Mammary epithelial cell (primary cell): ENCODE measurements at regions of chr20 and their contacts with region 1.

Region 1: DNA sequence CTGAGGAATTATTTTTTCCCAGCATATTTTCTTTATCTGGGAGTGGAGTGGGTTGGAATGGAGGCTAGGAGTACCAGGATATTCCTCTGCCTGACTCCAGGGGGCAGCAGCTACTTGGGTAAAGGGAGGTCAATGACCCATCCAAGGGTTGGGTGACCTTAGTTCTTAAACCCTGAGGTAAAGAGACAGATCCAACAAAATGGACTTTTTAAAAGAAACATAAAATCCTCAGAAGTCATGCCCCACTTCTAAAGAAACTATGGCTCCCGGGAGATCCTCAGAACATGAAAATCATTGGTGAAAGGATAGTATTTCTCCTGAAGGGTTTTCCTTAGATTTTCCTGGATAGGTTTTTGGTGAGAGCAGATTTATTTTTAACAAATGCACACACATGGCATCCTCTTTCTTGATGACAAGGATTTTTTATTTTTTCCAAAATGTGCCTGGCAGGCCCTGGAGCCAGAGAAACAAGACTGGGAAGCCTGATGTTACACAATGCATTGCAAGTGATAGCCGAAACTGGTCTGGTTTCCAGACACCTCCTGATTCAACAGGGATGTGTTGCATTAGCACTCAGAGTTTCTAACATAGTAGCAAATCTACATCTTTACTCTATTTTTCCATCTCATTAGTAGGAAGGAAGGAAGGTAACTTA is 240.9 kb upstream of the BTBD3 start:
- DNase-seq: peak; percentile 27
- H3K4me3 ChIP-seq: no peak overlapping the region
- H3K27ac ChIP-seq: no peak overlapping the region
- H3K4me1 ChIP-seq: no peaks in the 10 kb centered on the region
- H3K27me3 ChIP-seq: no peaks in the 10 kb centered on the region
- CTCF ChIP-seq: peak; percentile 87 to 94

Region 2: GRCh38 chr20:11849976-11850670 is 173.4 kb after region 1 on chr20:
- CTCF ChIA-PET with region 1: no interaction called
- dilution Hi-C with region 1: no loop called
- in situ Hi-C with region 1: no loop called
- intact Hi-C with region 1: loop called (anchors 5 kb)
- DNase-seq: peak; percentile 93
- H3K4me3 ChIP-seq: peak overlapping the region in 2 of 3 experiments; percentile 39 to 41
- H3K27ac ChIP-seq: peak overlapping the region; percentile 89
- H3K4me1 ChIP-seq: peaks cover 43% of the 10 kb centered on the region
- H3K27me3 ChIP-seq: no peaks in the 10 kb centered on the region
- CTCF ChIP-seq: no peak

Region 3: GRCh38 chr20:11917663-11918062 is 240.9 kb after region 1 on chr20 and contains the start of gene BTBD3:
- CTCF ChIA-PET with region 1: no interaction called
- dilution Hi-C with region 1: no loop called
- in situ Hi-C with region 1: no loop called
- intact Hi-C with region 1: loop called (anchors 2 kb)
- DNase-seq: peak; percentile 83
- H3K4me3 ChIP-seq: peak within 1 kb of the TSS; percentile 22 to 33 (median 24)
- H3K27ac ChIP-seq: peak within 1 kb of the TSS; percentile 47
- H3K4me1 ChIP-seq: peaks cover 51% of the 10 kb centered on the region
- H3K27me3 ChIP-seq: no peaks in the 10 kb centered on the region
- CTCF ChIP-seq: peak in 1 of 2 donors; percentile 39
- total RNA-seq, gene BTBD3: 32.2 to 41.0 TPM

Region 4: DNA sequence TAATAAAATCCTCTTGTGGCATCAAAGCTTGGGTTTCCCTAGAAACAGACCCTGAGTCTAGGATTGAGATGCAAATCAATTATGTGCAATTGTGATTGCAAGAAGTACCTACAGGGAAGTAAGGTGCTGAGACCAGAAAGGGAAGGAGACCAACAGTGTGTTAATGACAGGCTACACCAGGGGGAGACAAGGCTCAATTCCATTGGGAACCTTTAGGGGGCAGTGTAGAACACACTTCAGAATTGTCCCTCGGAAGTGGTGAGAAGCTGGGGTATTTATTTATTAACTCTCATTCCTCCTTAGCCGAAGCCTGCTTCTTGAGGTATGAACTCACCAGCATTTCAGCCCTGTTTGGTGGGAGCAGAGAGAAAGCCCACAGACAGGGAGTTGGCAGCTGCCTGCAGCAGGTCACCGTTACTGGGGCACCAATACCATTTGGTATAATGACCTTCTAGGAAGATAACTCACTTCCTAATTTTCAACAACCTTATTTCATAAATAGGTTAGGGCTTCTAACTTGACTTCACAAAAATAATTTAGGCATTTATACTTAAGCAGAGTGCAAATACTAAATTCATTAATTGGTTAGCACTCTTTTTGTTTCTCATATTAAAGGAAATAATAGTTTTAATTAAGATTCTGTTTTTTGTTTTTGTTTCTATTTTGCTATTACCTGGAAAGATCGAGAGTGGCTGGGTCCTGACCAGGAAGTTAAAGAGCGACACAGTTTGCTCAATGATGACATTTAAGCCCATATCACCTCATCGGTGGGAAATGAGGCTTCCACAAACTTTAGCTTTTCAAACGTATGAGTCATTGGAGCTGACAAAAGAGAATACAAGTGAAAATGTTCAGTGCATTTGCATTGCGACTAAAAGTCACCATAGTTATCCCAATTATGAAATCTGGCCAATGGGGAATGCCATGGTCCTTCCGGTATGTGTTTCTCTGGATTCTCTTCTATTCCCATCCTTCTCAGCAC is 335.8 kb after region 1 on chr20:
- CTCF ChIA-PET with region 1: no interaction called
- dilution Hi-C with region 1: no loop called
- in situ Hi-C with region 1: no loop called
- intact Hi-C with region 1: loop called (anchors 1 kb)
- DNase-seq: peak; percentile 51
- H3K4me3 ChIP-seq: no peak overlapping the region
- H3K27ac ChIP-seq: no peak overlapping the region
- H3K4me1 ChIP-seq: no peaks in the 10 kb centered on the region
- H3K27me3 ChIP-seq: no peaks in the 10 kb centered on the region
- CTCF ChIP-seq: peak; percentile 99 to 100

Region 5: DNA sequence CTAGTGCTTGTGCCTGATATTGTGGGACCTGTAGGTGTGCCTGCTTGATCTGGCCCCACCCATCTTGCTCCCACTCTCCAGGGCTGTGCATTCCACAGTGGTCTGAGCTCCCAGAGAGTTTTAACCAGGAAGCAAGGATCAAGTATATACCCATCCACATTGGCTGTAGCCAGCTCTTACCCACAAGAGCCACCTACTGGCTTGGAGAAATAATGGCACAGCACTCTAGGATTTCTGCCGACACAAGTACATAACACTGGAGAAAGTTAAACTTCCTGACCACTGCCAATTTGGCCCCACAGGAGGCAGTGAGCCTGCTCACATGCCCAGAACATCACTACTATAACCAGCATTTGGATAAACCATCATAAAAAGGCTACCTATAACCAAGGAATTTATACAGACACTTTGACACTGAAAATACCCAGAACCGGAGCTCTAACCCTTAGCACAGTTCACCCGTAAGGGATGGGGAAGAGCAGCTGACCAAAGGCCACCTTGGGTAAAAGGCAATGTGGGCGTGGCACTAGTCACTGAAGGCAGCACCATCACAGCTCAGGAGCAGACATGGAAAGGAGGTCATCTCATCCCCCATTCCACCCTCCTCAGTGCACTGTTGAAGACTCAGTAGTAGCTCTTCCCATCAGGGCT is 681.4 kb after region 1 on chr20:
- CTCF ChIA-PET with region 1: no interaction called
- dilution Hi-C with region 1: no loop called
- in situ Hi-C with region 1: no loop called
- intact Hi-C with region 1: loop called (anchors 2 kb)
- DNase-seq: peak; percentile 31
- H3K4me3 ChIP-seq: no peak overlapping the region
- H3K27ac ChIP-seq: no peak overlapping the region
- H3K4me1 ChIP-seq: no peaks in the 10 kb centered on the region
- H3K27me3 ChIP-seq: no peaks in the 10 kb centered on the region
- CTCF ChIP-seq: peak; percentile 27 to 61